ENCODE measurements at regions of chr9 and their contacts with region 1.

Region 1: DNA sequence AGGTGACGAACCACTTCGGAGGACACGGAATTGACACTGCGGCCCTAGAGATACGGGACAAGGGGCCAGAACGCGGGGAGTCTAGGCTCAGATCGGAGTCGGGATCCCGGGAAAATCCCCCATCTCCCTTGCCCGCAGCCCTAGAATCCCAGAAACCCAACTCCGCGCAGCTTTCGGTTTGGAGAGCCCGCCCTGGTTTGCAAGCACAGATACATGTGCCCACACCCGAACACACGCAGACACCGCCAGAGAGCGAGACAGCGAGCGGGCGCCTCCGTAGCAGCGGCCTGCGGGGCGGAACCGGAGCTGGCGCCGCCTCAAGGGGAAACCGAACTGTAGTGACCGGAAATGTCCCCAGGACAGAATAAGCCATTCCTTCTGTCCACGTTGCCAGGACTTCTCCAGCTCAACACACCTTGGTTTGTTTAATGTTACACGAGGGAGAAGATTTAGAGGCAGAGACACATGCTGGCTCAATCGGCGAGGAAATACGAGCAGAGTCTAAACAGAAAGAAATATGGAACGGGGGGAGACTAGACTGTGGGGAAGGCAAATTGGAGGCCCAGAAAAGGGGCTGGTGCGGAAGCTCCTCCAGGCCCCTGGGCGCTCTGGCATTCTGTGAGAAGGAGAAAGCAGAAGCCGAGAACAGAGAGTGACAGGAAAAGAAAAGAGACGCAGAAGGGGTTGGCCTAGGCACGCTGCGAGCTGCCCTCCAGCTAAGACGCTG is 2.9 kb upstream of the PAX5 start:
- DNase-seq: no peak
- ATAC-seq: peak; percentile 52
- H3K4me3 ChIP-seq: peak overlapping the region; percentile 96
- H3K27ac ChIP-seq: peak overlapping the region; percentile 92
- H3K4me1 ChIP-seq: peaks cover 8% of the 10 kb centered on the region
- H3K27me3 ChIP-seq: no peaks in the 10 kb centered on the region
- CTCF ChIP-seq: 0 out of 6 replicates have a peak, but pooled peaks of 1 of the 3 experiments have one; percentile 2
- EP300 ChIP-seq: no peak
- POLR2A ChIP-seq: 0 out of 2 replicates have a peak, but pooled peaks have one; percentile 2
- RAD21 ChIP-seq: no peak

Region 2: GRCh38 chr9:36592801-36593583 is 443.9 kb before region 1 on chr9:
- CTCF ChIA-PET with region 1: no interaction called
- POLR2A ChIA-PET with region 1: interaction called, 10 read pairs
- RAD21 ChIA-PET with region 1: no interaction called
- SMC1A ChIA-PET with region 1: no interaction called
- in situ Hi-C with region 1: no loop called
- intact Hi-C with region 1: no loop called
- DNase-seq: no peak
- ATAC-seq: no peak
- H3K4me3 ChIP-seq: no peak overlapping the region
- H3K27ac ChIP-seq: no peak overlapping the region
- H3K4me1 ChIP-seq: no peaks in the 10 kb centered on the region
- H3K27me3 ChIP-seq: no peaks in the 10 kb centered on the region
- CTCF ChIP-seq: no peak
- EP300 ChIP-seq: no peak
- POLR2A ChIP-seq: no peak
- RAD21 ChIP-seq: no peak

Region 3: DNA sequence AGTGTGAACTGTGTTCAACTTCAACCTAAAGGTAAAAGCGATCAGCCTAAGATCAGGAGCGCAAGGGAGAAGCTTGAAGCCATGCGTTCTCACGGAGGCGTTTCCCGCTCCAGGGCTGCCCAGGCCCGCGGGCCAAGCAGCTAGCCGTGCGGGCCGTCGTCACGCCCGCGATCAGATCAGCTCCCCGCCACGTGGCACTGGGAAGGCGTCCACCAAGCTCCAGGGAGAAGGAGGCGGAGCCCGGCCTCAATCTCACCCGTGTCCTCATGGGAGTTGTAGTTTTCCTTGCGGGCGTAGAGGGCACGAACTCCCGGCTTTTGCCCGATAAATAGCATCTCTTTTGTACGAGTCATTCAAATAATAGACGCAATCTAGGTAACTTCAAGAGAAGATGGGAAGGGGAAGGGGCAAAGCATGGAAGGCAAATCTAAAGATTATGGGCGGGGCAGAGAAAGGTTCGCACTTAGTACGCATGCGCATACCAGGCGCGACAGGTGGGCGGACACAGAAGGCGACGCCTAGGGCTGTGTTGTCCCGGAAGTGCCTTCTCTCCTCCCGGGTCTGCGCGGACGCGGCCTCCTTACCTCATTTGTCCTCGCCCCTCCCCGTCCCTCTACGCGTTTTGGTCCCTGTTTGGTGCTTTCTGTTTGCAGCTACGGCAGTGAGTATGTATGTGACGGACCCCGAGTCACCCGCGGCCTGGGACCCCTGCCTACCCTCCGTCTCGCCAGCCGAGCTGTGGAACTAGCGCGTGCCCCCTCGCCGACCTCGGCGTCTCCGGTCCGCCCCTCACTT is 42.6 kb after region 1 on chr9:
- CTCF ChIA-PET with region 1: interaction called, 11 read pairs
- POLR2A ChIA-PET with region 1: interaction called, 14 read pairs
- RAD21 ChIA-PET with region 1: interaction called, 12 read pairs
- SMC1A ChIA-PET with region 1: interaction called, 31 read pairs
- in situ Hi-C with region 1: no loop called
- intact Hi-C with region 1: loop called (anchors 2 kb)
- DNase-seq: peak; percentile 93
- ATAC-seq: peak; percentile 93
- H3K4me3 ChIP-seq: peak overlapping the region; percentile 84
- H3K27ac ChIP-seq: peak overlapping the region; percentile 87
- H3K4me1 ChIP-seq: peaks cover 20% of the 10 kb centered on the region
- H3K27me3 ChIP-seq: no peaks in the 10 kb centered on the region
- CTCF ChIP-seq: no peak
- EP300 ChIP-seq: no peak
- POLR2A ChIP-seq: peak; percentile 89
- RAD21 ChIP-seq: no peak

Region 4: DNA sequence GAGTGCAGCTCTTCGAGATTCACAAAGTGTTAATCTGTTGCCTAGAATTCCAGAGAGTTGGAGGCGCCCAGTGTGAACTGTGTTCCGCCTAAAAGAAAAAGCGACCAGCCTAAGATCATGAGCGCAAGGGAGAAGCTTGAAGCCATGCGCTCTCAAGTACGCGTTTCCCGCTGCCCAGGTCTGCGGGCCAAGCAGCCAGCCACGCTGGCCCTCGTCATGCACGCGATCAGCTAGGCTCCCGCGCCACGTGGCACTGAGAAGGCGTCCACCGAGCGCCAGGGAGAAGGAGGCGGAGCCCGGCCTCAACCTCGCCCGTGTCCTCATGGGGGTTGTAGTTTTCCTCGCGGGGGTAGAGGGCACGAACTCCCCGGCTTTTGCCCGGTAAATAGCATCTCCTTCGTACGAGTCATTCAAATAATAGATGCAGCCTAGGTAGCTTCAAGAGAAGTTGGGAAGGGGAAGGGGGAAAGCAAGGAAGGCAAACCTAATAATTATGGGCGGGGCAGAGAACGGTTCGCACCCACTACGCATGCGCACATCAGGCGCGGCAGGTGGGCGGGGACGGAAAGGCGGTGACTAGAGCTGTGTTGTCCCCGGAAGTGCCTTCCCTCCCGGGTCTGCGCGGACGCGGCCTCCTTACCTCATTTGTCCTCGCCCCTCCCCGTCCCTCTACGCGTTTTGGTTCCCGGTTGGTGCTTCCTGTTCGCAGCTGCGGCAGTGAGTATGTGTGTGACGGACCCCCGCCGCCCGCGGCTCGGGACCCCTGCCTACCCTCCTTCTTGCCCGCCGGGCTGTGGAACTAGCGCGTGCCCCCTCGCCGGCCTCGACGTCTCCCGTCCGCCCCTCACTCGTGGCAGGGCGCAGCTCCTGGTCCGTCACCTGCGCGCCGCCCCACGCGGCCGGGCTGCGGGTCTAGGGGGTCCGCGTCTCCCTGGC is 83.2 kb after region 1 on chr9 and contains the start of gene ZCCHC7:
- CTCF ChIA-PET with region 1: interaction called, 6 read pairs
- POLR2A ChIA-PET with region 1: interaction called, 6 read pairs
- RAD21 ChIA-PET with region 1: interaction called, 15 read pairs
- SMC1A ChIA-PET with region 1: interaction called, 10 read pairs
- in situ Hi-C with region 1: no loop called
- intact Hi-C with region 1: loop called (anchors 2 kb)
- DNase-seq: peak; percentile 89
- ATAC-seq: peak; percentile 94
- H3K4me3 ChIP-seq: peak within 1 kb of the TSS; percentile 93
- H3K27ac ChIP-seq: peak within 1 kb of the TSS; percentile 93
- H3K4me1 ChIP-seq: peaks cover 8% of the 10 kb centered on the region
- H3K27me3 ChIP-seq: no peaks in the 10 kb centered on the region
- CTCF ChIP-seq: no peak
- EP300 ChIP-seq: no peak
- POLR2A ChIP-seq: peak; percentile 92
- RAD21 ChIP-seq: no peak
- polyA plus RNA-seq, gene ZCCHC7: 58.6 to 60.8 TPM

Region 5: GRCh38 chr9:37167456-37168047 is 130.6 kb after region 1 on chr9:
- CTCF ChIA-PET with region 1: no interaction called
- POLR2A ChIA-PET with region 1: no interaction called
- RAD21 ChIA-PET with region 1: no interaction called
- SMC1A ChIA-PET with region 1: no interaction called
- in situ Hi-C with region 1: no loop called
- intact Hi-C with region 1: no loop called
- DNase-seq: no peak
- ATAC-seq: no peak
- H3K4me3 ChIP-seq: no peak overlapping the region
- H3K27ac ChIP-seq: no peak overlapping the region
- H3K4me1 ChIP-seq: peaks cover 9% of the 10 kb centered on the region
- H3K27me3 ChIP-seq: no peaks in the 10 kb centered on the region
- CTCF ChIP-seq: no peak
- EP300 ChIP-seq: no peak
- POLR2A ChIP-seq: no peak
- RAD21 ChIP-seq: no peak

Region 6: GRCh38 chr9:37302277-37302676 is 265.3 kb after region 1 on chr9:
- CTCF ChIA-PET with region 1: interaction called, 6 read pairs
- POLR2A ChIA-PET with region 1: interaction called, 7 read pairs
- RAD21 ChIA-PET with region 1: interaction called, 5 read pairs
- SMC1A ChIA-PET with region 1: interaction called, 3 read pairs
- in situ Hi-C with region 1: no loop called
- intact Hi-C with region 1: loop called (anchors 5 kb)
- DNase-seq: peak; percentile 90
- ATAC-seq: peak; percentile 91
- H3K4me3 ChIP-seq: peak overlapping the region; percentile 43; the same call in 1 of the 2 replicates
- H3K27ac ChIP-seq: peak overlapping the region; percentile 95
- H3K4me1 ChIP-seq: peaks cover 48% of the 10 kb centered on the region
- H3K27me3 ChIP-seq: no peaks in the 10 kb centered on the region
- CTCF ChIP-seq: no peak
- EP300 ChIP-seq: peak; percentile 82 to 93
- POLR2A ChIP-seq: no peak
- RAD21 ChIP-seq: peak; percentile 31; the same call in 1 of the 2 replicates

Region 7: DNA sequence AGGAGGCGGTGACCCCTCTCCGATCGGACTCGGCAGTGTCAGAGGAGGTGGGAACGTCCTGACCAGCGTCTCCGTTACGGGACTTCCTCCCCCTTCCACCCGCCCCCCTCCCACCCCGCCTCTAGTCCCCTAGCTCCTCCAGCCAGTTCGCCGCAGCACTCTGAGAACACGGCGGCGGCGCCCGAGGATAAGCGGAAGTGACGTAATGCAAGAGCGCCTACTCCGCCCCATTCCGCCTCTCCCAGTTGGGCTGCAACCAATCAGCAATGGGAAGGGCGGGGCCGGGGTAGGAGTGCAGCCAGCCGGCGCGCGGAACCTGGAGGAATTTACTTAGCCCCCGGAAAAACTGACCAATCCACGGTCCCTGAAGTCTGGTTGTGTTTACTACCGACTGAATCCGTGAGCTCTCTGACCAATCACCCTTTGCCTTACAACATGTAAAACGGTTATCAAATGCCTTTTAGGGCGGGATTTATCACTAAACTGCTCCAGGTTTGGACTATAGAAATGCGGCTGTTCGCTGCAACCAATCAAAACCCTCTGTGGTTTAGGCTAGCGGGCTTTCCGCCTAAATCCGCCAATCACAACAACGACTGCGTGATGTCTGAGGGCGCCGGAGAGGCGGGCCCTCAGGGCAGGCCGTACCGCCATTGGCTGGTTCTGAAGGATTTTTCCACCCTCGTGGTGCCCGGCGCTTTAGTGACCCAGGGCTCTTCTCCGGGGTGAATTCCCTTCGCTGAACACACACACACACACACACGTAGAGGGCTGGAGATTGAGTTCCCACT is 428.5 kb after region 1 on chr9 and contains the start of gene ZBTB5:
- CTCF ChIA-PET with region 1: no interaction called
- POLR2A ChIA-PET with region 1: no interaction called
- RAD21 ChIA-PET with region 1: no interaction called
- SMC1A ChIA-PET with region 1: no interaction called
- in situ Hi-C with region 1: no loop called
- intact Hi-C with region 1: loop called (anchors 5 kb)
- DNase-seq: peak; percentile 100
- ATAC-seq: peak; percentile 85
- H3K4me3 ChIP-seq: peak within 1 kb of the TSS; percentile 84
- H3K27ac ChIP-seq: peak within 1 kb of the TSS; percentile 92
- H3K4me1 ChIP-seq: no peaks in the 10 kb centered on the region
- H3K27me3 ChIP-seq: no peaks in the 10 kb centered on the region
- CTCF ChIP-seq: no peak
- EP300 ChIP-seq: no peak
- POLR2A ChIP-seq: no peak
- RAD21 ChIP-seq: no peak
- polyA plus RNA-seq, gene ZBTB5: 1.4 to 2.5 TPM